CD4-positive, alpha-beta memory T cell (primary cell): ENCODE measurements at regions of chr3 and their contacts with region 1.

Region 1: GRCh38 chr3:125585595-125586223 is 9.6 kb downstream of the OSBPL11 start:
- DNase-seq: peak in 4 of 5 donors; percentile 24 to 33 (median 31)
- H3K4me3 ChIP-seq: no peak overlapping the region
- H3K4me3 Mint-ChIP-seq: peak overlapping the region in 2 of 8 donors; percentile 29 to 30
- H3K27ac ChIP-seq: no peak overlapping the region
- H3K27ac Mint-ChIP-seq: peak overlapping the region in 2 of 7 donors; percentile 29 to 43
- H3K4me1 ChIP-seq: peaks cover 22% of the 10 kb centered on the region
- H3K4me1 Mint-ChIP-seq: peaks cover 13 to 28% (median 19%) of the 10 kb centered on the region in 4 donors
- H3K27me3 ChIP-seq: no peaks in the 10 kb centered on the region
- H3K27me3 Mint-ChIP-seq: no peaks in the 10 kb centered on the region

Region 2: DNA sequence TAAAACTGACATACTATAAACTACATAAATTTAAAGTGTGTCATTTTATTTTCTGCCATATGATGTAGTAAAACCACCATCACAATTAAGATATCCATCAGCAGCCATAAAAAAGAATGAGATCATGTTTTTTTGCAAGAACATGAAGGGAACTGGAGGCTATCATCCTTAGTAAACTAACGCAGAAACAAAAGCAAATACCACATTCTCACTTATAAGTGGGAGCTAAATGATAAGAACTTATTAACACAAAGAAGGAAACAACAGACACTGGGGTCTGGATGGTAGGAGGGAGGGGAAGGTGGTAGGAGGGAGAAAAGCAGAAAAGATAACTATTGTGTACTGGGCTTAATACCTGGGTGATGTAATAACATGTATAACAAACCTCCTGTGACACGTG is 1649.3 kb before region 1 on chr3:
- CTCF ChIA-PET with region 1: no interaction called
- POLR2A ChIA-PET with region 1: no interaction called
- intact Hi-C with region 1: no loop called
- DNase-seq: no peak
- H3K4me3 ChIP-seq: no peak overlapping the region
- H3K4me3 Mint-ChIP-seq: no peak overlapping the region
- H3K27ac ChIP-seq: no peak overlapping the region
- H3K27ac Mint-ChIP-seq: peak overlapping the region in 1 of 7 donors; percentile 33
- H3K4me1 ChIP-seq: no peaks in the 10 kb centered on the region
- H3K4me1 Mint-ChIP-seq: peaks cover 0 to 4% (median under 1%) of the 10 kb centered on the region in 4 donors
- H3K27me3 ChIP-seq: no peaks in the 10 kb centered on the region
- H3K27me3 Mint-ChIP-seq: no peaks in the 10 kb centered on the region

Region 3: GRCh38 chr3:124928333-124929202 is 657.1 kb before region 1 on chr3:
- CTCF ChIA-PET with region 1: interaction called, 8 read pairs
- POLR2A ChIA-PET with region 1: no interaction called
- intact Hi-C with region 1: loop called (anchors 1 kb)
- DNase-seq: peak; percentile 42 to 59 (median 50)
- H3K4me3 ChIP-seq: no peak overlapping the region
- H3K4me3 Mint-ChIP-seq: peak overlapping the region in 1 of 8 donors; percentile 23
- H3K27ac ChIP-seq: no peak overlapping the region
- H3K27ac Mint-ChIP-seq: peak overlapping the region in 1 of 7 donors; percentile 9
- H3K4me1 ChIP-seq: no peaks in the 10 kb centered on the region
- H3K4me1 Mint-ChIP-seq: peaks cover 0 to 2% (median 0%) of the 10 kb centered on the region in 4 donors
- H3K27me3 ChIP-seq: no peaks in the 10 kb centered on the region
- H3K27me3 Mint-ChIP-seq: peaks cover 7 to 9% of the 10 kb centered on the region in 2 donors

Region 4: DNA sequence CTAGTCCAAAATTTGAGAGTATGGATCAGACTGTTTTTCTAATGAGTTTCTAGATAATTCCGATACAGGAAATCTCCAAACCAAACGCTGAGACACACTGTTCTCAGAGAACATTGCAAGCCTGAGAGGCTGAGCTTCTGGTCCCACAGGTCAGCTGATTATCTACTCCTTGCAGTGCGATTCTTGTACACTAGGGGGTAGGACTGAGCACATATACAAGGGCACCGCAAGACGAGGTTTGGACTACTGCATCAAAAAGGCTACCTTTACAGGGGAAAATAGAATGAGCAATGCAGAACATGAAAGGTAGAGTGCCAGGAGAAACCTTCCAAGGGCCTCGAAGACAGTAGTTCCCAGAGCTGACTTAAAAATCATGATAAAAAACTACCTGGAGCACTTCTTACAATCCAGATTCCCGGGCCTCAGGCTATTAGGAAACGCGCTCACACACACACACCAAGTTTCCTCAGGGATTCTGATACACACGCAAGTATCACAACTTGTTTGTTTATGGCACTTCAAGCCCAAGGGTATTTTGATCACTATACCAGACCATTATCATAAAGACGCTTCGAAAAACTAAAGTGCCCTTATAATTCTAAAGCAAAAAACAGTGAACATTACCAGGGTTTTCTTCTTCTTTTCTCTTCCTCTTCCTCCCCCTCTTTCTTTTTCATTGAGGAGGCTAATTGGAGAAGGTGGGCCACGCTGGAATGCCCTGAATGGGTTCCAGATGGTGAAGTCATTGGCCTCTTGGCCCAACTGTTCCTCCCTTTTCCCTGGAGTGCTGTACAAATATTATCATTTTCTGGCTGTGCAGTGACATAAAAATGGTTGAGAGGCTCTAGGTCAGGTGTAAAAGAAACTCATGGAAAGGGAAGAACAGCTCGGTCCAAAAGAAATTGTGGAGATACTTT is 434.9 kb before region 1 on chr3:
- CTCF ChIA-PET with region 1: no interaction called
- POLR2A ChIA-PET with region 1: no interaction called
- intact Hi-C with region 1: loop called (anchors 1 kb)
- DNase-seq: peak in 4 of 5 donors; percentile 34 to 57 (median 46)
- H3K4me3 ChIP-seq: no peak overlapping the region
- H3K4me3 Mint-ChIP-seq: no peak overlapping the region
- H3K27ac ChIP-seq: no peak overlapping the region
- H3K27ac Mint-ChIP-seq: no peak overlapping the region
- H3K4me1 ChIP-seq: peaks cover 7% of the 10 kb centered on the region
- H3K4me1 Mint-ChIP-seq: peaks cover 7 to 13% (median 9%) of the 10 kb centered on the region in 4 donors
- H3K27me3 ChIP-seq: no peaks in the 10 kb centered on the region
- H3K27me3 Mint-ChIP-seq: no peaks in the 10 kb centered on the region

Region 5: GRCh38 chr3:125443923-125444322 is 141.8 kb before region 1 on chr3:
- CTCF ChIA-PET with region 1: interaction called, 14 read pairs
- POLR2A ChIA-PET with region 1: no interaction called
- intact Hi-C with region 1: loop called (anchors 10 kb)
- DNase-seq: no peak
- H3K4me3 ChIP-seq: no peak overlapping the region
- H3K4me3 Mint-ChIP-seq: no peak overlapping the region
- H3K27ac ChIP-seq: no peak overlapping the region
- H3K27ac Mint-ChIP-seq: no peak overlapping the region
- H3K4me1 ChIP-seq: no peaks in the 10 kb centered on the region
- H3K4me1 Mint-ChIP-seq: peaks cover 0 to 1% (median 0%) of the 10 kb centered on the region in 4 donors
- H3K27me3 ChIP-seq: no peaks in the 10 kb centered on the region
- H3K27me3 Mint-ChIP-seq: no peaks in the 10 kb centered on the region

Region 6: GRCh38 chr3:125573216-125573615 is 12.5 kb before region 1 on chr3:
- CTCF ChIA-PET with region 1: interaction called, 14 read pairs
- POLR2A ChIA-PET with region 1: no interaction called
- intact Hi-C with region 1: no loop called
- DNase-seq: no peak
- H3K4me3 ChIP-seq: no peak overlapping the region
- H3K4me3 Mint-ChIP-seq: no peak overlapping the region
- H3K27ac ChIP-seq: no peak overlapping the region
- H3K27ac Mint-ChIP-seq: no peak overlapping the region
- H3K4me1 ChIP-seq: no peaks in the 10 kb centered on the region
- H3K4me1 Mint-ChIP-seq: peaks cover 0 to 2% (median under 1%) of the 10 kb centered on the region in 4 donors
- H3K27me3 ChIP-seq: no peaks in the 10 kb centered on the region
- H3K27me3 Mint-ChIP-seq: no peaks in the 10 kb centered on the region